Tibial artery (tissue), 4 donors: ENCODE measurements at regions of chr2 and their contacts with region 1.

Region 1: GRCh38 chr2:100984892-100985379 is 17.2 kb upstream of the RPL31 start:
- DNase-seq: peak; percentile 74 to 86
- H3K4me3 ChIP-seq: no peak overlapping the region
- H3K27ac ChIP-seq: peak overlapping the region in 1 of 2 donors; percentile 13
- H3K4me1 ChIP-seq: peaks cover 0 to 13% (median 0%) of the 10 kb centered on the region in 4 donors
- H3K27me3 ChIP-seq: no peaks in the 10 kb centered on the region
- CTCF ChIP-seq: peak; percentile 86 to 93

Region 2: DNA sequence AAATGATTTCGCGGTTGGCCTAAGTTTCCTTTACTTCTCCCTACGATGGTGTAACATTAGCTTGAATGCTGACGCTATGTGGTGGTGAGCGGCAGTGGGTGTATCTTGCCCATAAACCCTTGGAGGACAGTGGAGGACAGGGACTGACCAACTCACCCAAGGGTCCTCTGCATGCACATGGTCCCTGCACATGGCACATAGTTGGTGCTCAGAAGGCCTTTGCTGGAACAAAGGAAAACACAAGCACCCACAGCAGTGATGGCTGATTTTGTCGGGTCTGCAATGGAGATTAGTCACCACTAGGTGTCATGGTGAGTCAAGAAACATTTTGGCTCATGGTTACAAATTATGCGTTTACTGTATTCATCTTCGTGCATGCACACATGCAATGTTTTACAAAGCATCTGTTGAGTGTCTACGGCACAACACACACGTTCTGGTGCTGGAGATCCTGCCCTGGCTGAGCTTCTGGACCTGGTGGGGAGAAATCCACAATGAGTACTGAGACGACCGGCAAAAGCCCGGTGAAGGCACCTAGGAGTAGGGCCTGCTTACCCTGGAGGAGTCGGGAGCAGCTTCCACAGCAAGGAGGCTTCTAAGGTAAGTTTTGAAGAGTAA is 378.1 kb before region 1 on chr2:
- intact Hi-C with region 1: loop called (anchors 5 kb)
- DNase-seq: no peak
- H3K4me3 ChIP-seq: no peak overlapping the region
- H3K27ac ChIP-seq: no peak overlapping the region
- H3K4me1 ChIP-seq: peaks cover 0 to 19% (median 10%) of the 10 kb centered on the region in 4 donors
- H3K27me3 ChIP-seq: peaks cover 0 to 6% of the 10 kb centered on the region in 2 donors
- CTCF ChIP-seq: peak; percentile 71 to 73

Region 3: DNA sequence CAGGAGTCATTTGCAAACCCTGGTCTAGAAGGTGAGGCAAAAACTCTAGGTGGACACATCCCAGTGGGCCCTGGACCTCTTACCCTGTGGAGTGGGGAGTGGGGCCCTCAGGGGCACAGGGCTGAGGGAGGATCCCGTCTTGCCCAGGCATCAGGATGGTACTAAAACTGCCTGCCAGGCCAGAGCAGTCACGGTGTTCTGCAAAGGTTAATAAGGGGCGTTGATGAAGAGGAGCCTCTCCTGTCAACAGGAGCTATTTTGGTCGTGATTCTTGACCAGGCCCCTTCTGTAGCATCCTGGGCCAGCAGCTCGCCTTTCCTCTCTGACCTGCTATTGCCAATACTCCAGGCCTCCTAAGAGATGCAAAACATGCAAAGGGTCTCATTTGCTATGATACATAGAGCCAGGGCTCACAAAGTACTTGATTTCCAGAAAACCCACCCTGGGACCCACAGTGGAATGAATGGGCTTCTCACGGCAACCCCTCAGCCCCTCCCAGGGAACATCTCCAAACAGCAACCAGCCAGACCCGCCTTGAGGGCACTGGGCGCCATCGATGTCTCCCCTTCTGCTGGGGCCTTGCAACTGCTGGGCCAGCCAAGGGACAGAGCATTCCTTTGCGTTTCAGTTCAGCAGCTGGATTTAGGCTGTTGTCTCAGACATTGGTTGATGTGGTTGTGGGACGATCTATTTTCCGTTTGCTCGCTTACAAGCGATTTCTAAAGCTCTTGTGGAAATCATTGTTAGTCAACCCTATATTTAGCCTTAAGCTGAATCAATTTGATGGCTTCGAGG is 311.0 kb before region 1 on chr2:
- intact Hi-C with region 1: no loop called
- DNase-seq: no peak
- H3K4me3 ChIP-seq: no peak overlapping the region
- H3K27ac ChIP-seq: no peak overlapping the region
- H3K4me1 ChIP-seq: no peaks in the 10 kb centered on the region
- H3K27me3 ChIP-seq: no peaks in the 10 kb centered on the region
- CTCF ChIP-seq: no peak

Region 4: DNA sequence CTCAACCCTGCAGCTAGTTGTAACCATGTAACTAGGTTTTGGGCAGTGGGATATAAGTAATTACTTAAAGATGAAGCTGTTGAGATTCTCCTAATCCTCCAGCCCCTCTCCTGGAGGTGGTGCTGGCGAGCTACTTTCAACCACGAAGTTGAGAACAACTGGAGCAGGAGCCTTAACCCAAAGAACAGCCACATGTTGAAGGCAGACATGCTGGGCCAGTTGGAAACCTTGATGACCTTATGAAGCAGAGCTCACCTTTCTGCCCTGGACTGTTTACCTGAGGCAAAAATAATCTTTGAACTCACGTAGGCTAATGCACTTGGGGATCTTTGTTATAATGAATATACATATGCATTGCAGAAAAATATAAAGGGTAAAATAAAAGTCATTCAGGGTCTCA is 254.6 kb before region 1 on chr2:
- intact Hi-C with region 1: loop called (anchors 5 kb)
- DNase-seq: peak; percentile 44 to 76
- H3K4me3 ChIP-seq: no peak overlapping the region
- H3K27ac ChIP-seq: no peak overlapping the region
- H3K4me1 ChIP-seq: no peaks in the 10 kb centered on the region
- H3K27me3 ChIP-seq: peaks cover 0 to 4% of the 10 kb centered on the region in 2 donors
- CTCF ChIP-seq: peak; percentile 49 to 50

Region 5: GRCh38 chr2:101038455-101039255 is 53.7 kb after region 1 on chr2:
- intact Hi-C with region 1: no loop called
- DNase-seq: no peak
- H3K4me3 ChIP-seq: no peak overlapping the region
- H3K27ac ChIP-seq: no peak overlapping the region
- H3K4me1 ChIP-seq: no peaks in the 10 kb centered on the region
- H3K27me3 ChIP-seq: no peaks in the 10 kb centered on the region
- CTCF ChIP-seq: peak; percentile 24 to 41